ENCODE measurements at regions of chr2 and their contacts with region 1.

Region 1: DNA sequence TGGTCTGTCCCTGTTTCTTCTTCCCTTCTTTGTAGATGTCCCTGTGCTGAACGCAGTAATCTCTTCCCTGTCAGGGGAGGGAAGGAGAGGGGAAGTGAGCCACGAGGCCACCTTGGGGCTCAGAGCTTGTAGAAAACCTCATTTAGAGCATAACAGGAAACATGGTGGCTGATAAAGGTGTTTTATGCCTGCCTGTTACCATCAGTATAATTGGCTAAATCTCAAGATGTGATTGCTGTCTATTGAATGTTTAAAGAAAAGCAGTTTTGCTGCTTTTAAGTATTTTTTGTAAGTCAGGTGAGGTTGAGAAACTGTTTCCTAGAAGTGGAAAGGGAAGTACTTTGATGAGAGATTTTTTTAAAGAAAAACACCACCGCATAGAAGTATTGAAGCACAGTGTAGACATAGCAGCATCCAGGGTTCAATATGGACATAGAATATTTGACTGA is 59.7 kb upstream of the PDK1 start:
- DNase-seq: no peak
- H3K4me3 ChIP-seq: no peak overlapping the region
- CTCF ChIP-seq: no peak

Region 2: DNA sequence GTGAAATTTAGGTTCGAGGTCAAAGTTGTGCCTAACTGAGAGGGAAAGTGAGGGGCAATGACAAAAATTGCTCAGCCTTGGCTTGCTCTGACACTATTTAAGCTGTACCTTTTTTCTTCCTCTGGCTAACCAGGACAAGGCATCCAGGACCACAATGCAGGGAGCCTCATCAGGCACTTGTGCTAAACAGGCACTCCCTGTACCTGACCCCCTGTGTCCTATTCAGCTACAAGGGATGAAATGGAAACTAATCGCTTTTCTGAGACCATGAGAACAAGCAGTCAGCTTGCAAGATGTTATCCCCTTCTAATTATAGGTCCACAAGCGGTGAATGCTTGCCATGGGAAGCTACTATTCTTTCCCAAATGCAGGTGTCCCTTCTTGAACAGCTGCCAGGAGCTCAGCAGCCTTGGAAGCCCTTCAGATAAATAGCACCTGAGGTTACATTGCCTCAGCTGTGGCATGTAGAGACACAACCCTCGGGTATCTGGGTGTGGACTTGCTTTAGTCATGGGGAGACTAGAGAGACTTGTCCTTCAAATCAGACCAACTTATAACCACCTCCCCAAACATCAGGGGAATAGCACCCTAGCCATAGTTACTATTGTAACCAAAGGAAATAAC is 87.9 kb before region 1 on chr2:
- CTCF ChIA-PET with region 1: no interaction called
- POLR2A ChIA-PET with region 1: no interaction called
- DNase-seq: no peak
- H3K4me3 ChIP-seq: no peak overlapping the region
- CTCF ChIP-seq: no peak

Region 3: GRCh38 chr2:172484253-172484652 is 11.9 kb before region 1 on chr2:
- CTCF ChIA-PET with region 1: interaction called, 28 read pairs
- POLR2A ChIA-PET with region 1: no interaction called
- DNase-seq: no peak
- H3K4me3 ChIP-seq: no peak overlapping the region
- CTCF ChIP-seq: no peak